ENCODE measurements at regions of chr1 and their contacts with region 1.

Region 1: GRCh38 chr1:223133824-223134435 is 9.1 kb downstream of the TLR5 start:
- DNase-seq: peak; percentile 91 to 92
- H3K4me3 ChIP-seq: peak overlapping the region; percentile 51; the same call in 1 of the 2 replicates
- H3K27ac ChIP-seq: peak overlapping the region; percentile 73
- H3K4me1 ChIP-seq: peaks cover 33% of the 10 kb centered on the region
- H3K27me3 ChIP-seq: no peaks in the 10 kb centered on the region
- CTCF ChIP-seq: peak; percentile 96

Region 2: DNA sequence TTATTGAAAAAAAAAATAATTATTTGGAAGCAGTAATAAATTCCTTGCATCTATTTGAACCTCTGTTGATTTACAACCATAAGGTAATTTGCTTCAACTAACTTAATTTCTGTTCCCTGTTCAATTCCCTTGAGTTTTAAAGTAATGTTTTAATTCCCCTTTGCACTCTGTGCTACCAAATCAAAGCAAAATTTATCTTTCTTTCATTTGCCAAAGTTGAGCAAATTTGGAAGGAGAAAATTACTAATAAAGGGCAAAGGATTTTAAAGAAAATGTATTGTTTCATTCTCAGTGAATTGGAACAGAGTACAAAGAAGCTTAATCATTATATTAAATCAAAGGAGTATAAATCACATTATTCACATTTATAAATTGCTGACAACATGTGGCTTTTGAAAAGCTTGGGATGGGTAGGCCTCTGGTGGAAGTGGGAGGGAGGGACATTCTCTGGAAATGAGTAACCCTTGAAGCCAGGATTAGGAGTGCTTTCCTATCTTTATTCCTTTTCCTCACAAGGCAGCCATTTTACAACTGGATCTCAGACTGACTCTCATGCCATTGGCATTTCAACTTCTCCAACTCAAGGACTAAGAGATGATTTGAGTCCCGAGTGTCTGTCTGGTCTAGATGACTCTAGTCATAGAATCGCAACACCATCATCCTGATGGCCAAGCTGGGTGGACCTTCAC is 1060.5 kb before region 1 on chr1:
- CTCF ChIA-PET with region 1: no interaction called
- POLR2A ChIA-PET with region 1: no interaction called
- intact Hi-C with region 1: no loop called
- DNase-seq: no peak
- H3K4me3 ChIP-seq: no peak overlapping the region
- H3K27ac ChIP-seq: no peak overlapping the region
- H3K4me1 ChIP-seq: no peaks in the 10 kb centered on the region
- H3K27me3 ChIP-seq: no peaks in the 10 kb centered on the region
- CTCF ChIP-seq: no peak

Region 3: GRCh38 chr1:223123011-223123610 is 10.8 kb before region 1 on chr1:
- CTCF ChIA-PET with region 1: interaction called, 30 read pairs
- POLR2A ChIA-PET with region 1: interaction called, 8 read pairs
- intact Hi-C with region 1: no loop called
- DNase-seq: no peak
- H3K4me3 ChIP-seq: peak overlapping the region; percentile 16; the same call in 1 of the 2 replicates
- H3K27ac ChIP-seq: no peak overlapping the region
- H3K4me1 ChIP-seq: peaks cover 43% of the 10 kb centered on the region
- H3K27me3 ChIP-seq: no peaks in the 10 kb centered on the region
- CTCF ChIP-seq: no peak

Region 4: DNA sequence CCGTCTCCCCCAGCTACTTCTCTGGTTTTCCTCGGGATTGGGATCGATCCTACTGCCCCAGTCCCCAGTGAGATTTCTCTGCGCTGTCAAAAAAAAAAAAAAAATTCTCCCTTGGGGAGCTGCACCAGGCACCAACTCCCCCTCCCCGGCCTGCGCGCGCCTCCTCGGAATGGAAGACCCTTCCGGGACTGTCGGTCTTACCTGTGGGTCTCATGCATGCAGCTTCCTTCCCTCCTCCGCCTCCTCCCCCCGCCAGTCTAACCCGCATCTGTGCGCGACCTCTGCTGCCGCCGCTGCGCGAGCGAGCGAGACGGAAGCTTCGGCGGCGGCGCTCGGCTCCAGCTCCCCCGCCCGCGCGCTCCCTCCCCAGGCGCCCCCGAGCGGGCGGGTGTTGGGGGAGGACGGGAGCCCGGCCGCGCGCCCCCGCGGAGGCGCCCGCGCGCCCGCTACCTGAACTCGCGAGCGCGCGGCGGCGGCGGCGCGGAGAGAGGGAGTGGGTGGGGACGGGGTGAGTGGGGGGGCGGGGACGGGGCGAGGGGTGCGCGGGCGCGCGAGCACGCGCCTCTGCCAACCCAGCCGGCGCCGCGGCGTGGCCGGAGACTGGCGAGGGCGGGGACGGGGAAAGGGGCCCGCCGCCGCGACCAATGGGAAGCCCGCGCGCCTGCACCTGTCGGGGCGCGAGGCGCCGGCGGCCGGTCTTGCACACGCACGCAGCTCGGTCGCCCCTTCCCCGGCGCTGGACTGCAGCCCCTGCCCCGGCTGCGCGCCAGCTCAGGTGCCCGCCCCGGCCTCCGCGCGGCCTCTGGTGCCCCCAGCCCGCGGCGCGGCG is 230.1 kb after region 1 on chr1 and contains the start of gene SUSD4:
- CTCF ChIA-PET with region 1: interaction called, 7 read pairs
- POLR2A ChIA-PET with region 1: no interaction called
- intact Hi-C with region 1: loop called (anchors 5 kb)
- DNase-seq: peak in 1 of 2 experiments; percentile 54
- H3K4me3 ChIP-seq: peak within 1 kb of the TSS; percentile 63
- H3K27ac ChIP-seq: no peak within 1 kb of the TSS
- H3K4me1 ChIP-seq: peaks cover 6% of the 10 kb centered on the region; the same call in 1 of the 2 replicates
- H3K27me3 ChIP-seq: peaks cover 55% of the 10 kb centered on the region
- CTCF ChIP-seq: no peak
- total RNA-seq, gene SUSD4: 2.0 and 3.2 TPM in 2 replicates

Region 5: DNA sequence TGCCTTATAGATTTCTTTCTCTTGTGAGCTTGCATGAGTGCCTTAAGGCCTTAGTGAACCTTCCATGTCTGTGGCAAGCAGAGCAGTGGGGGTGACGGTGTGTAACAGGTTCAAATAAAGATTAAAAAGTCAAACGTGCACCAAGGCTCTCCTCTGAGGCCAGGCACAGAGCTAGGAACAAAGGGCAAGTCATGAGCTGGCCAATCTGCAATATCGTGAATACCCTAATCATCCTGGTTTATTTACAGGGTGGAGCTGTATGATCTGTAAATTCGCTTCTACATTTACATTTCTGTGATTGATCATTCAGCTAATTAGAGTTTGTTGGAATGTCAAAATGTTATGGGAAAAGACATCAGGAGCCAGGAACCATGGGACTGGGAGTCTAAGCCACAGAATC is 411.4 kb after region 1 on chr1:
- CTCF ChIA-PET with region 1: no interaction called
- POLR2A ChIA-PET with region 1: interaction called, 14 read pairs
- intact Hi-C with region 1: no loop called
- DNase-seq: no peak
- H3K4me3 ChIP-seq: no peak overlapping the region
- H3K27ac ChIP-seq: no peak overlapping the region
- H3K4me1 ChIP-seq: no peaks in the 10 kb centered on the region
- H3K27me3 ChIP-seq: no peaks in the 10 kb centered on the region
- CTCF ChIP-seq: no peak

Region 6: DNA sequence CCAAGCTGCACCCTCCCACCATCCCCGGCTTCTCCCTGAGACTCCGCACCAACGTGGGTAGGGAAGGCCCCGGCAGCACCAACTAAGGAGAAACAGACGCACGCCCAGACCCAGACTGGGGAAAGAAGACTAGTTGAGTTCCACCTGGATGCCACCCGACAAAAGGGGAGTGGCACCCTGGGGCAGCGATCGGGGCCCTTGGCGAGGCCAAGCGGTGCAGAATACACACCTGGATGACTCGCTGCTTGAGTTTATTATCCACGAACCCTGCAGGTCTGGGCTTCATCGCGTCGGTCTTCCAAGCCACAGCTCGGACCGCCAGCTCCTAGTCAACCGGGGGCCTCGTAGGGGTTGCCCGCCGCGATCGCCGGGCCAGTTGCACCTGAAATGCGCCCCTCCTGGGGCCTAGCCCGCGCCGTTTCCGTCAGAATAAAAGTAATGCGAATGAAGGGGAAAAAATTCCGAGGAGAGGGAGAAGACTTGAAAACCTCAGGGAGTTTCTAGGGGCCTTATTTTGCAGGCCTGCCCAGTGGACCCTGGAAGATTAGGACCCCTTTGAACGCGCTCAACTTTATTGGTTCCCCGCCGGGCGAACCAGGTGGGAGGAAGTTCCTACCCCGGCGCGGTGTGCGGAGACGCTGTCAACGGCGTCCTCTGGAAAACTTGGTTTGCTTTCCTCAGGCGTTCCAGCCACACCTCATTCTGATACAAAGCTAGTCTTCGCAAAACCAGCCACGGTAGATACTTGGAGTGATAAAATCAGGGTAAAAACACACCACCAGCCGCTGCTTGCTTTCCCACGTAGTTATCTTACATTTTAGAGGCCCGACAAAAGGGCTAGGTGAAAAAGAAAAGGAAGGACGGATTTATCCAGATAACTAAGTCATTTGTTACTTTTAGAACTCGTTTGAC is 1196.2 kb after region 1 on chr1 and contains the start of gene NVL:
- CTCF ChIA-PET with region 1: no interaction called
- POLR2A ChIA-PET with region 1: no interaction called
- intact Hi-C with region 1: loop called (anchors 10 kb)
- DNase-seq: peak; percentile 84 to 91
- H3K4me3 ChIP-seq: peak within 1 kb of the TSS; percentile 87
- H3K27ac ChIP-seq: peak within 1 kb of the TSS; percentile 78
- H3K4me1 ChIP-seq: peaks cover 16% of the 10 kb centered on the region
- H3K27me3 ChIP-seq: no peaks in the 10 kb centered on the region
- CTCF ChIP-seq: no peak
- total RNA-seq, gene NVL: 27.3 and 36.1 TPM in 2 replicates

Measured in PC-9 (cell line).